PC-9 (cell line): ENCODE measurements at regions of chr2 and their contacts with region 1.

Region 1: DNA sequence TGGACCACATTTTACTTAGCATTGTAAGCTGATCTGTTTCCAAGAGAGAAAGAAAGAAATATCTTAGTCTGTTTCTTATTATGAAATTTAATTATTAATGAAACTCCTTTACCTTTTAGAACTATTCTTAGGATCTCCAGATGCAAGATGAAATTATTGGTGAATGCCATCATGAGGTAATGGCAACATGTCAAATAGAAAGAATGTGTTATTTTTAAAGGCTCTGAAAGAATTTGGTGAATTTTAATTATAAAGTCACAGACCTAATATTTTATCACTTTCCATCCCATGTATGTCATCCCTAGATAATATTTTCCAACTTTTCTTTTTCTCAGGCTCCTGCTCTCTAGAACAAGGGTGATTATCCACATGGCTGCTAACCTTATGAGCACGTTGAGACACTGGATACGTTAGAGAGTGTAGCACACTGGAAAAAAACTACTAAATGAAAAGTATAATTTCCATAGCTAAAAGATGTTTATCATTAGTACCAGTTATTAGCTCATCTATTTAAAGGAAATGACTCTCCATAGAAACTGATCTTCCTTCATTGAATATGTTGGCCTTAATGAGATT is 95.2 kb upstream of the SCG2 start:
- DNase-seq: no peak
- H3K4me3 ChIP-seq: no peak overlapping the region
- H3K27ac ChIP-seq: peak overlapping the region; percentile 70
- H3K4me1 ChIP-seq: peaks cover 33% of the 10 kb centered on the region
- H3K27me3 ChIP-seq: no peaks in the 10 kb centered on the region
- CTCF ChIP-seq: no peak

Region 2: GRCh38 chr2:223459328-223459939 is 238.0 kb before region 1 on chr2:
- CTCF ChIA-PET with region 1: no interaction called
- POLR2A ChIA-PET with region 1: no interaction called
- intact Hi-C with region 1: no loop called
- DNase-seq: no peak
- H3K4me3 ChIP-seq: no peak overlapping the region
- H3K27ac ChIP-seq: no peak overlapping the region
- H3K4me1 ChIP-seq: peaks cover 21% of the 10 kb centered on the region
- H3K27me3 ChIP-seq: no peaks in the 10 kb centered on the region
- CTCF ChIP-seq: peak; percentile 75

Region 3: DNA sequence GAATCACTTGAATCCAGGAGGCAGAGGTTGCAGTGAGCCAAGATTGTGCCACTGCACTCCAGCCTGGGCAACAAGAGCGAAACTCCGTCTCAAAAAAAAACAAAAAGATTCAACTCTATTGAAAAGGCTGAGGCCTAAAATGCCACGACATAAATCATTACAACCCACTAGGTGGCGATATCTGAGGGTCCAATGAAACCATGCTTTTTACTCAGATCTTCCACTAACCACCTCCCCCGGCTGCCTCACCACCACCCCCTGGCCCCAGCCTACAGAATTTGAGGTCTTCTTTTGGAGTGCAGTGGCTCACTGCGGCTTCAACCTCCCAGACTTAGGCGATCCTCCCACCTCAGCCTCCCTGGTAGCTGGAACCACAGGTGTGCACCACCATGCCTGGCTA is 82.5 kb after region 1 on chr2:
- CTCF ChIA-PET with region 1: interaction called, 14 read pairs
- POLR2A ChIA-PET with region 1: no interaction called
- intact Hi-C with region 1: no loop called
- DNase-seq: peak; percentile 58 to 69
- H3K4me3 ChIP-seq: no peak overlapping the region
- H3K27ac ChIP-seq: no peak overlapping the region
- H3K4me1 ChIP-seq: no peaks in the 10 kb centered on the region
- H3K27me3 ChIP-seq: no peaks in the 10 kb centered on the region
- CTCF ChIP-seq: peak; percentile 84